Activated naive CD4-positive, alpha-beta T cell treated with anti-CD3 and anti-CD28 coated beads for 36 hours (primary cell): ENCODE measurements at regions of chr9 and their contacts with region 1.

Region 1: DNA sequence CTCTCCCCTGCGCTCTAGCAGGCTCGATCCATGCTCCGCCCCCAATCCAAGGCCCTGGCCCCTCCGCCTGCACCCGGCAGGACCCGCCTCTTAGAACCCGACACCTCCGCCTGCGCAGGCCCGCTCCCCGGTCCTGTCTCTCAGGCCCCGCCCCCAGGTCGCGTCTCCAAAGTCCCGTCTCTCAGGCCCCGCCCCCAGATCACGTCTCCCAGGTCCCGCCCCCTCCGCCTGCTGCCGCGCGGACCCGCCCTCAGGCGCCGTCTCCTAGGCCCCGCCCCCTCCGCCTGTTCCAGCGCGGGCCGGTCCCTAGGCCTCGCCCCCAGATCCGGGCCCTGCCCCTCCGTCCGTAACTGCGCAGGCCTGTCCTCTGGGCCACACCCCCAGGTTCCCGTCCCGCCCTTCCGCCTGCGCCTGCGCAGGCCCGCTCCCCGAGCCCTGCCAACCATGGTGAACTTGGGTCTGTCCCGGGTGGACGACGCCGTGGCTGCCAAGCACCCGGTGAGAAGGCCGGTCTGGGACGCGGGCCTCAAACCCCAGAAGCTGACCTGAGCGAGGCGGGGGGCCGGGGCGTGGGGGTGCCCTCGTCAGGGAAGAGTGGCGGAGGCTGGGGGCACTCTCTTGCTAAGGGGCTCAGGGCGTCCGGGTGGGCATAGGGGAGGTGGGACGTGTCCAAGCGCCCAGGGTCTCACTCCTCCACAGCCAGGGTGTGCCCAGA is at the start of gene TMEM141:
- DNase-seq: peak; percentile 100
- H3K4me3 Mint-ChIP-seq: peak within 1 kb of the TSS; percentile 83
- H3K27ac Mint-ChIP-seq: peak within 1 kb of the TSS; percentile 79
- H3K4me1 Mint-ChIP-seq: peaks cover 19% of the 10 kb centered on the region
- H3K27me3 Mint-ChIP-seq: no peaks in the 10 kb centered on the region
- total RNA-seq, gene TMEM141: 38.1 to 39.6 TPM

Region 2: DNA sequence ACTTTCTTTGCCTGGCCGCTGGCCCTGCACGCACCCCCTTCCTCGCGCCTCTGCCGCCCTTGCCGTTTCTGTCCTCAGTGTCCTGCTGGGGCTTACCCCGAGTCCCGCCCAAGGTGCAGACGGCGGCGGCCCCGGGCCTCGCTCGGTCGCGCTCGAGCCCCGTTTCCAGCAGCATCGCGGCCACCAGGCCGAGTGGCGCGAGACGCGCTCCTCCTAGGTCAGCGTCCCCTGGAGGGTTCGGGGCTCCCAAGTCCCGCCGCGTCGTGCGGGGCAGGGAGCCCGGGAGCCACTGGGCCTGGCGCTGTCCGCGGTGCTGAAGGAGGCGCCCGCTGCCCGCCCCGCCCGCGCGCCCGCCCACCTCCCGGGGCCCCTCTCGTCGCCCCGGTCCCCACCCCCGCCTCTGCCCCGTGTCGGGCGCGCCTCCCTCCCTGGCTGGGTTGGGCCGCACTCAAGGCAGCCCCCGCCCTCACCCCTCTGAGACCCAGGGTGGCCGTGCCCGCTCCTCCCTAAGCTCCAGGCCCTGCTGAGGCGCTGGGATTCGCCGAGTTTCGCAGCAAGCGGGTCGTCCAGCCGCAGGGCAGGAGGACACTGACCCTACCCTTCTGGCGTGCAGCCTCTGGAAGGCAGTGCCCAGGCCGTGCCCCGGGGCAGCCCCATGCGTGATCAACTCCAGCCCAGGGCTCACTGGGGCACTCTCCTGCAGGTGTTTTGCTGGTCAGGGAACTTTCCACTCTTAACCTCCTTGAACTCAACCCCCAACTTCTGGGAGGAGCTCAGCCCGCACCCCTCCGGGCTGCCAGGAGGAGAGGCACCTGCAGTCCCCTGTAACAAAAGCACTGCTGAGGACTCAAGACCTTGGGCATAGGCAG is 586.0 kb before region 1 on chr9 and contains the start of gene LHX3:
- CTCF ChIA-PET with region 1: no interaction called
- intact Hi-C with region 1: no loop called
- DNase-seq: peak; percentile 15
- H3K4me3 Mint-ChIP-seq: no peak within 1 kb of the TSS
- H3K27ac Mint-ChIP-seq: no peak within 1 kb of the TSS
- H3K4me1 Mint-ChIP-seq: peaks cover 2% of the 10 kb centered on the region
- H3K27me3 Mint-ChIP-seq: peaks cover 26% of the 10 kb centered on the region
- total RNA-seq, gene LHX3: not detected

Region 3: DNA sequence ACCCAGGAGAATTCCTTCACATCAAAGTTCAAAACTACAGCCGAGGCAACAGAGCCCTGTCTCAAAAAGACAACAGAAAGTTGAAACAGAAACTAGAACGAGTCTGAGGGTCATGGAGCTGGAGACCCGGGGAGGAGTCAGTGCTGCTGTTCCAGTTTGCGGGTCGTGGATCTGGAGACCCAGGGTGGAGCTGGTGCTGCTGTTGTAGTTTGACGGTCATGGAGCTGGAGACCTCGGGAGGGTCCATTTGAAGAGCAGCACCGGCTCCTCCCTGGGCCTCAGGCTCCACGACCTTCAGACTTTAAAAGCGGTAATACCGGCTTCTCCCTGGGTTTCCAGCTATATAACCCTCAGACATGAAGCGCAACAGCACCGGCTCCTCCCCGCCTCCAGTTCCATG is 13.7 kb before region 1 on chr9:
- CTCF ChIA-PET with region 1: interaction called, 23 read pairs
- intact Hi-C with region 1: no loop called
- DNase-seq: no peak
- H3K4me3 Mint-ChIP-seq: no peak overlapping the region
- H3K27ac Mint-ChIP-seq: no peak overlapping the region
- H3K4me1 Mint-ChIP-seq: no peaks in the 10 kb centered on the region
- H3K27me3 Mint-ChIP-seq: peaks cover 6% of the 10 kb centered on the region

Region 4: GRCh38 chr9:136849038-136849959 is 58.2 kb after region 1 on chr9 and contains the start of gene PHPT1:
- CTCF ChIA-PET with region 1: interaction called, 6 read pairs
- intact Hi-C with region 1: loop called (anchors 1 kb)
- DNase-seq: peak; percentile 99
- H3K4me3 Mint-ChIP-seq: peak within 1 kb of the TSS; percentile 93
- H3K27ac Mint-ChIP-seq: peak within 1 kb of the TSS; percentile 95
- H3K4me1 Mint-ChIP-seq: peaks cover 14% of the 10 kb centered on the region
- H3K27me3 Mint-ChIP-seq: peaks cover 18% of the 10 kb centered on the region
- total RNA-seq, gene PHPT1: 110 to 116 TPM

Region 5: DNA sequence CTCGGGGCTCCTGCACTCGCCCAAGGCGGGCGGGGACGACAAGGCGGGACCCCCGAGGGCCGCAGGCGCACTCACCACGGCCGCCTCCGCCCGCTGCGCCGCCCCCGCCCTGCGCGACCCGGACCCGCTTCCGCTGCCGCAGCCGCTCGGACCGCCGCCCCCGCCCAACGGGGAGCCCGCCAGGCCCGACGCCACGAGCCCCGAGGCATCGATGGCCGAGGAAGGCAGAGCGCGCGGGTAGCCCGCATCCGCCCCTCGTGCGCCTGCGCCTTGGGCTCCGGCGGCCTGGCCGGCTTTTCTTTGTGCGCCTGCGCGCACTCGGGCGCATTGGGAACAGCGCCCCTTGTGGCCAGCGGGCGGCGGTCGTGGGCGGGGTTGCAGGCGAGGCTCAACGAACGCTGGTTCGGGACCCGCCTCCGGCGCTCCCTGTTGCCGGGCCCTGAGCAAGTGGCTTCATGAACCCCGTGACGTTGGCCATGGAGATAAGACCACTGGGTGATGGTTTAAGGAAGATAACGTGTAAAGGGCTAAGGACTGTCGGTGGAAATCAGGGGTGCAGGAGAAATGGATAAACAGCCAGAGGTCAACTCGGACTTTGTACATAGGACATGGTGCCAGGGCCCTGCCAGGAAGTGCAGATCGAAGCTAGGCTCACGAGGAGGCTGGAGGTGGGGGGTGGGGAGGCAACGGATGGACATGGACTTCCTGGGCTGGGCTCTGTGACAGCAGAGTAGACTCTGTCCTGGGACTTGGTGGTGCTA is 153.6 kb after region 1 on chr9 and contains the starts of genes C8G and FBXW5:
- CTCF ChIA-PET with region 1: no interaction called
- intact Hi-C with region 1: loop called (anchors 2 kb)
- DNase-seq: peak; percentile 94
- H3K4me3 Mint-ChIP-seq: peak within 1 kb of the TSS; percentile 77
- H3K27ac Mint-ChIP-seq: peak within 1 kb of the TSS; percentile 81
- H3K4me1 Mint-ChIP-seq: peaks cover 9% of the 10 kb centered on the region
- H3K27me3 Mint-ChIP-seq: no peaks in the 10 kb centered on the region
- total RNA-seq, gene C8G: 0.83 TPM in 1 of 2 experiments, not detected in the other
- total RNA-seq, gene FBXW5: 44.0 to 47.8 TPM

Region 6: GRCh38 chr9:137029058-137029936 is 238.2 kb after region 1 on chr9:
- CTCF ChIA-PET with region 1: interaction called, 27 read pairs
- intact Hi-C with region 1: no loop called
- DNase-seq: peak; percentile 82
- H3K4me3 Mint-ChIP-seq: peak overlapping the region; percentile 56
- H3K27ac Mint-ChIP-seq: no peak overlapping the region
- H3K4me1 Mint-ChIP-seq: peaks cover 34% of the 10 kb centered on the region
- H3K27me3 Mint-ChIP-seq: peaks cover 5% of the 10 kb centered on the region

Region 7: DNA sequence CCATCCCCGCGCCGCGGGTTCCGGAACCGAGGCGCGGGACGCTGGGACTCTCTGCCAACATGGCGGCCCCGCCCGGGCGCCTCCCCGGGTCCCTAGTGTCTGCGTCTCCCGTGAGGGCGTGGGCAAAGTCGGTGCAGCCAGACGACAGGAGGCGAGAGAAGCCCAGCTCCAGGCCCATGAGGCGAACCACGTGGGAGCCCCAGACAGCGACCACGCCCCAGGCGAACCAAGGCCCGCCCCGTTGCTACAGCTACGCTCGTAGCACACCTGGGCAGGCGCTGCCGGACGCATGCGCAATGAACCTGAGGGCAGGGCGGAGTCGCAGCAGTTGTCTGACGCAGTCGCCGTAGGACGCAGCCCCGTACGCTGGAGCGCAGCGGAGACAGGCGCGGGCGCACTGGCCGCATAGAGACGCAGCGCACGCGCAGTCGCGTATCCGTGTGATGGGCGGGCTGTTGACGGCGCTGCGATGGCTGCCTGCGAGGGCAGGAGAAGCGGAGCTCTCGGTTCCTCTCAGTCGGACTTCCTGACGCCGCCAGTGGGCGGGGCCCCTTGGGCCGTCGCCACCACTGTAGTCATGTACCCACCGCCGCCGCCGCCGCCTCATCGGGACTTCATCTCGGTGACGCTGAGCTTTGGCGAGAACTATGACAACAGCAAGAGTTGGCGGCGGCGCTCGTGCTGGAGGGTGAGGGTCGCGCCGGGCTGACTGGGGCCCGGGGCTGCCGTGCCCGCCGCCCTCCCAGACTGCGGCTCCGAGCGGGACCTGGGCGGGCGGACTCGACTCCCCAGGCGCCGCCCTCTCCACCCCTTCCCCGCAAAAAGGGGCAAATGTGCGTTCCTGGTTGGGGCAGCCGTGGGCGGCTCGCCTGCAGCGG is 295.7 kb after region 1 on chr9 and contains the start of gene MAN1B1:
- CTCF ChIA-PET with region 1: no interaction called
- intact Hi-C with region 1: loop called (anchors 1 kb)
- DNase-seq: peak; percentile 100
- H3K4me3 Mint-ChIP-seq: peak within 1 kb of the TSS; percentile 89
- H3K27ac Mint-ChIP-seq: peak within 1 kb of the TSS; percentile 89
- H3K4me1 Mint-ChIP-seq: peaks cover 36% of the 10 kb centered on the region
- H3K27me3 Mint-ChIP-seq: no peaks in the 10 kb centered on the region
- total RNA-seq, gene MAN1B1: 18.7 to 18.9 TPM

Region 8: DNA sequence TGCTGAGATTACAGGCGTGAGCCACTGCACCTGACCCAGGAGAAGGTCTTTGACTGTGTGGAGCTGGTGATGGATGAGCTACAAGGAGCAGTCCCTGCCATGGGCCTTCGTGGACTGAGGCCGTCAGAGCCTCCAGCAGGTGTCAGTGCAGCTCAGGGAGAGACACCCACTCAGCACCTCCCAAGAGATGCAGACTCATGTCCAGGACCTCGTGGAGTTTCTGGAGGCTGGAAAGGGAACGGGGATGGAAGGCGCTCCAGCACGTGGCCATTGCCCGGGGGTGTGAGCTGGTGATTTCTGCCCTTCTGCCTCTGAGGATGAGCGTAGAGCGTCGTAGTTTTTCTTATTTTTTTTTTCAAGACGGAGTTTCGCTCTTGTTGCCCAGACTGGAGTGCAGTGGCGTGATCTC is 495.9 kb after region 1 on chr9:
- CTCF ChIA-PET with region 1: no interaction called
- intact Hi-C with region 1: no loop called
- DNase-seq: peak; percentile 46
- H3K4me3 Mint-ChIP-seq: no peak overlapping the region
- H3K27ac Mint-ChIP-seq: no peak overlapping the region
- H3K4me1 Mint-ChIP-seq: no peaks in the 10 kb centered on the region
- H3K27me3 Mint-ChIP-seq: peaks cover 10% of the 10 kb centered on the region